Right cardiac atrium (tissue), 5 donors: ENCODE measurements at regions of chr13 and their contacts with region 1.

Region 1: GRCh38 chr13:109331898-109332297 is 454.5 kb downstream of the IRS2 start:
- DNase-seq: no peak
- ATAC-seq: peak in 1 of 2 donors; percentile 17
- H3K4me3 ChIP-seq: no peak overlapping the region
- H3K27ac ChIP-seq: no peak overlapping the region
- H3K4me1 ChIP-seq: no peaks in the 10 kb centered on the region
- H3K27me3 ChIP-seq: no peaks in the 10 kb centered on the region

Region 2: GRCh38 chr13:109145631-109146030 is 186.3 kb before region 1 on chr13:
- intact Hi-C with region 1: loop called in 1 of 4 experiments (anchors 10 kb)
- DNase-seq: peak in 1 of 3 donors; percentile 47
- ATAC-seq: peak; percentile 84 to 88
- H3K4me3 ChIP-seq: no peak overlapping the region
- H3K27ac ChIP-seq: no peak overlapping the region
- H3K4me1 ChIP-seq: no peaks in the 10 kb centered on the region
- H3K27me3 ChIP-seq: no peaks in the 10 kb centered on the region

Region 3: DNA sequence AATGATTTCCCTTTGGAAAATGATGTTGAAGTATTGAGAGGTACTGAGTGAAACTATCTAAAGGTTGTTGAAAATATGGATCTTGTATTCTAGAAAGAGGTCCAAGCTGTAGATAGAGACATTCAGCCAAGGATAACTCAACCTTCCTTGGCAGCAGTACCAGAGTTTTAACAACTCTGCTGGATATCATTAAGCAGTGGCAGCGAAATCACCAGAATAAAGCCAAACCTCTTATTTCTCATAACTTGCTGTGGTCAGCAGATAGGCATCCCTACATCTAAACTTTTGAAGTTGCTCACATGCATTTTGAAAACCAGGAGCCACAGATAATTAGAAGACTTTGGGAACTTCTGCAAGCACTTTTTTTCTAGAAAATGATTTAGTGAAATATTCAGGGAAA is 105.3 kb before region 1 on chr13:
- intact Hi-C with region 1: no loop called
- DNase-seq: no peak
- ATAC-seq: no peak
- H3K4me3 ChIP-seq: no peak overlapping the region
- H3K27ac ChIP-seq: no peak overlapping the region
- H3K4me1 ChIP-seq: no peaks in the 10 kb centered on the region
- H3K27me3 ChIP-seq: no peaks in the 10 kb centered on the region

Region 4: GRCh38 chr13:109479991-109480691 is 148.2 kb after region 1 on chr13:
- intact Hi-C with region 1: no loop called
- DNase-seq: peak in 1 of 3 donors; percentile 21
- ATAC-seq: peak; percentile 72 to 84
- H3K4me3 ChIP-seq: no peak overlapping the region
- H3K27ac ChIP-seq: peak overlapping the region; percentile 20
- H3K4me1 ChIP-seq: peaks cover 3% of the 10 kb centered on the region
- H3K27me3 ChIP-seq: no peaks in the 10 kb centered on the region